Caco-2 (cell line): ENCODE measurements at regions of chr9 and their contacts with region 1.

Region 1: DNA sequence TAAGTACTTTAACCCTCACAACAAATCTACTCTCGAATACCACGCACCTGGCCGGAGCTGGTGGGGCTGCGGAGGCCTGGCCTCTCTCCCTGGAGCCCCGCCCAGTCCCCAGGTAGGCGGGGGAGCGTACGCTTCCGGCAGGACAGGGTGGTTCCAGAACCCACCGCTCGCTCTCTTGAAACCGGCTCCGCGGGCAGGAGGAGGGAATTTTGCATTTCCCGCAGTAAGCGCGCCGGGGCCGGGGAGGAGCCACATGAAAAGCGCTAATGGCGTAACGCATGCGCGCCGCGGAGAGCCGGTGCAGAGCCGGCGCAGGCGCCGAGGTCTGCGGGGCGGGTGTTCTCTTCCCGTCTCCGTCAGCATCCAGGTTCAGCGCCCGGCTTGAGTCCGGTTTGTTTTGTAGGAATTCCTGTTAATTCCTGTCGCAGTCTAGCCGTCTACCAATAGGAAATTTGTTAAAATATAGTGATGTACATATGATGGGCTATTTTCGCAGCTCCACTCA is 20.8 kb downstream of the CAVIN4 start:
- DNase-seq: peak; percentile 95
- H3K4me3 ChIP-seq: peak overlapping the region; percentile 52
- H3K4me3 Mint-ChIP-seq: peak overlapping the region; percentile 76
- H3K27ac Mint-ChIP-seq: peak overlapping the region; percentile 62
- H3K4me1 ChIP-seq: 0 out of 2 replicates have a peak, but pooled peaks cover 5% of the 10 kb centered on the region
- H3K4me1 Mint-ChIP-seq: peaks cover 20% of the 10 kb centered on the region
- H3K27me3 ChIP-seq: no peaks in the 10 kb centered on the region
- H3K27me3 Mint-ChIP-seq: no peaks in the 10 kb centered on the region
- CTCF ChIP-seq: no peak

Region 2: GRCh38 chr9:99184475-99185347 is 1414.0 kb before region 1 on chr9:
- CTCF ChIA-PET with region 1: no interaction called
- POLR2A ChIA-PET with region 1: no interaction called
- intact Hi-C with region 1: loop called (anchors 10 kb)
- DNase-seq: peak; percentile 81 to 82
- H3K4me3 ChIP-seq: no peak overlapping the region
- H3K4me3 Mint-ChIP-seq: no peak overlapping the region
- H3K27ac Mint-ChIP-seq: no peak overlapping the region
- H3K4me1 ChIP-seq: peaks cover 11% of the 10 kb centered on the region
- H3K4me1 Mint-ChIP-seq: peaks cover 9% of the 10 kb centered on the region
- H3K27me3 ChIP-seq: no peaks in the 10 kb centered on the region
- H3K27me3 Mint-ChIP-seq: peaks cover 16% of the 10 kb centered on the region
- CTCF ChIP-seq: peak; percentile 93 to 94

Region 3: DNA sequence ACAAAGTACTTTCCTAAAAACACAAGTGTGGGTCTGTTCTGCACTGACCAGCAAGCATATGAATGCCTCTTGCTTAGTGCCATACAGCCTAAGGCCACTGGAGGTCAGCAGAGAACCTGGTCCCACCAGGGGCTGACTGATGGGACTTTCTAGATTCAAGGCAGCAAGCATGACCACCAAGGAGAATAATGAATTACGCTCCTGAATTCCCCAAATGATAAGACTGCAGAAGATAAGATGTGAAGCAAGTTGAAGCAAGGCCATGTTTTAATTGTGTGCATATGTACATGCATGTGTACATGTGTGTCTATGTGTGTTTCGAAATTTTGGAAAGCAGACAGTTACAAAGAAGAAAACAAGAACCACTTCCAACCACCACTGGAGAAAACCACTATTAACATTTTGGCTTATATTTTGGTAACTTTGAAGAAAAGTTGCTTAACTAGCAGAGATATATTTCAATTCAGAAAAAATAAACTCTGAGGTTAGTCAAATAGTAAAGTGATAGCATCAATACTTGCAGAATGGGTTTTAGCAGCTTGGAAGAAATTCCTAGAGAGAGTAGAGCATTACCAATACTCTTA is 570.4 kb before region 1 on chr9:
- CTCF ChIA-PET with region 1: no interaction called
- POLR2A ChIA-PET with region 1: no interaction called
- intact Hi-C with region 1: loop called (anchors 1 kb)
- DNase-seq: peak; percentile 76 to 82
- H3K4me3 ChIP-seq: no peak overlapping the region
- H3K4me3 Mint-ChIP-seq: no peak overlapping the region
- H3K27ac Mint-ChIP-seq: no peak overlapping the region
- H3K4me1 ChIP-seq: no peaks in the 10 kb centered on the region
- H3K4me1 Mint-ChIP-seq: no peaks in the 10 kb centered on the region
- H3K27me3 ChIP-seq: no peaks in the 10 kb centered on the region
- H3K27me3 Mint-ChIP-seq: no peaks in the 10 kb centered on the region
- CTCF ChIP-seq: peak; percentile 84 to 95

Region 4: DNA sequence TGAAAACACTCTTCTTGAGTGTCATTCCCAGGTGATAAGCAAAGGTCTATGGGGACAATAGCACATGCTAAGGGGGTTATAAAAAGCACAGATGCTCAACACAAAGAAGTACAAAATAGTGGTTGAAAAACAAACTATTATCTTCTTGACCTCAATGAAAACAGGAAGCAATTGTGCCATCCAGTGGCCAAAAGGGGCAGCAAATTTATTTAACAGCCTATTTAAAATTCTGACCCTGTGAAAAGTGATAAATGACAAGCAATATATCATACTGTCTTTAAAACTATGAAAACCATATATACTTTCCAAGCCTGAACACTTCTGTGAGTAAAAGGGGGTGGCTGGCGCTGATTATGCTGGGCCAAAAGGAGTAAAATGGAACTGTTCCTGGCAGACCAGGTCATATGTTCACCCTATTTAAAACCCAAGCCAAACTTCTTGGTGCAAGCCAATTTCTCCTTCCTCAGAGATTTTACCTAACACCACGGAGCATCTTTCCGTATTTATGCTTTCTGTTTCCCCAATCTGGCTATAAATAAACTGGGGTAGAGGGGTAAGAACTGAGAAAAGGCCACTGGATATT is 275.6 kb before region 1 on chr9:
- CTCF ChIA-PET with region 1: interaction called, 3 read pairs
- POLR2A ChIA-PET with region 1: no interaction called
- intact Hi-C with region 1: loop called (anchors 1 kb)
- DNase-seq: peak; percentile 26 to 44
- H3K4me3 ChIP-seq: no peak overlapping the region
- H3K4me3 Mint-ChIP-seq: no peak overlapping the region
- H3K27ac Mint-ChIP-seq: no peak overlapping the region
- H3K4me1 ChIP-seq: no peaks in the 10 kb centered on the region
- H3K4me1 Mint-ChIP-seq: no peaks in the 10 kb centered on the region
- H3K27me3 ChIP-seq: no peaks in the 10 kb centered on the region
- H3K27me3 Mint-ChIP-seq: no peaks in the 10 kb centered on the region
- CTCF ChIP-seq: peak; percentile 53 to 58

Region 5: DNA sequence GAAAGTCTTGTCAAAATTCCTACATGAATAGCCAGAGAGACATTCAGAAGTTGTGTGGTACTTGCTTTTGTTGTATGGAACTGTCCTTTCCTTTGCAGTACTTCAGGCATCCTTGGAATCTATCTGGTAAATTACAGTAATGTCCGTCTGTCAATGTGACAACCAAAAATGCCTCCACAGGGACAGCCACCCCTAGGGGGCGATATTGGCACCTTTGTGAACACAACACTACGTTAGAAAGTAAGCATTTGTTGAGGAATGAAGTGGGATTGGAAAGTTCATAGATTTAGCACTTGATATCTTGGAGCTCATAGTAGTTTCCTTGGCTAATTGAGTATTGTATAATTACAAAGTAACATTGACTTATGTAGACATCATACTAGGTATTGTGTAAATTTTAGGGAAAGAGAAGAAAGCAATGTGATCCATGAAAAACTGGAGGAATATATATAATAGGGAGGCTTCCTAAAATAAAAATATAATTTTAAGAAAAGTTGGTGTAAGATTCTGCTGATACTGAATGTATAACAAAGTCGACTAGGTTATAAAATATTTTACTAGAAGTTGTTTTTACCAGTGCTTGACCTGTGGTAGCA is 93.0 kb before region 1 on chr9:
- CTCF ChIA-PET with region 1: interaction called, 3 read pairs
- POLR2A ChIA-PET with region 1: no interaction called
- intact Hi-C with region 1: loop called (anchors 1 kb)
- DNase-seq: peak; percentile 88 to 90
- H3K4me3 ChIP-seq: no peak overlapping the region
- H3K4me3 Mint-ChIP-seq: no peak overlapping the region
- H3K27ac Mint-ChIP-seq: no peak overlapping the region
- H3K4me1 ChIP-seq: no peaks in the 10 kb centered on the region
- H3K4me1 Mint-ChIP-seq: peaks cover 6% of the 10 kb centered on the region
- H3K27me3 ChIP-seq: no peaks in the 10 kb centered on the region
- H3K27me3 Mint-ChIP-seq: no peaks in the 10 kb centered on the region
- CTCF ChIP-seq: peak; percentile 74 to 78

Region 6: GRCh38 chr9:101028346-101029314 is 429.9 kb after region 1 on chr9 and contains the start of gene PLPPR1:
- CTCF ChIA-PET with region 1: no interaction called
- POLR2A ChIA-PET with region 1: no interaction called
- intact Hi-C with region 1: loop called (anchors 5 kb)
- DNase-seq: peak; percentile 59 to 81
- H3K4me3 ChIP-seq: peak within 1 kb of the TSS; percentile 41
- H3K4me3 Mint-ChIP-seq: peak within 1 kb of the TSS; percentile 84
- H3K27ac Mint-ChIP-seq: no peak within 1 kb of the TSS
- H3K4me1 ChIP-seq: 0 out of 2 replicates have a peak, but pooled peaks cover 3% of the 10 kb centered on the region
- H3K4me1 Mint-ChIP-seq: peaks cover 6% of the 10 kb centered on the region
- H3K27me3 ChIP-seq: peaks cover 3% of the 10 kb centered on the region
- H3K27me3 Mint-ChIP-seq: peaks cover 36% of the 10 kb centered on the region
- CTCF ChIP-seq: no peak
- total RNA-seq, gene PLPPR1: not detected in 2 replicates

Region 7: GRCh38 chr9:101063192-101063591 is 464.5 kb after region 1 on chr9:
- CTCF ChIA-PET with region 1: no interaction called
- POLR2A ChIA-PET with region 1: no interaction called
- intact Hi-C with region 1: no loop called
- DNase-seq: no peak
- H3K4me3 ChIP-seq: no peak overlapping the region
- H3K4me3 Mint-ChIP-seq: no peak overlapping the region
- H3K27ac Mint-ChIP-seq: no peak overlapping the region
- H3K4me1 ChIP-seq: 0 out of 2 replicates have a peak, but pooled peaks cover 7% of the 10 kb centered on the region
- H3K4me1 Mint-ChIP-seq: no peaks in the 10 kb centered on the region
- H3K27me3 ChIP-seq: no peaks in the 10 kb centered on the region
- H3K27me3 Mint-ChIP-seq: no peaks in the 10 kb centered on the region
- CTCF ChIP-seq: no peak

Region 8: DNA sequence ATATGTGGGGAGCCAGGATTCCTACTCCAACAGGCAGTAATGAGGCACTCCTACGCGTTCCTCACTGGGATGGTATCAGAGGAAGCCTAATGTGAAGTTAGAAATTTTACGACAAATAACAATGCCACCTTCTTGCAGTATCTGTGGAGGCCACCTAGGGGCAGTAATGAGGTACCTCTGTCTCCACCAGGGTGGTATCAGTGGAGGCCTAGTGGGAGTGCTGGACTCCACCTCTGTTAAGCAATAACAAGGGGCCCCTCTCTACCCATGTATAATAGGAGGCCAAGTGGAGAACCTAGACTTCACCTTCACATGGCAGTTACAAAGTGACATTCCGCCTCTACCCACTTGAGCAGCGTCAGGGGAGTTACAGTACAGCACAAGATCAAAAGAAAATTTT is 577.7 kb after region 1 on chr9:
- CTCF ChIA-PET with region 1: no interaction called
- POLR2A ChIA-PET with region 1: no interaction called
- intact Hi-C with region 1: no loop called
- DNase-seq: no peak
- H3K4me3 ChIP-seq: no peak overlapping the region
- H3K4me3 Mint-ChIP-seq: no peak overlapping the region
- H3K27ac Mint-ChIP-seq: no peak overlapping the region
- H3K4me1 ChIP-seq: no peaks in the 10 kb centered on the region
- H3K4me1 Mint-ChIP-seq: no peaks in the 10 kb centered on the region
- H3K27me3 ChIP-seq: no peaks in the 10 kb centered on the region
- H3K27me3 Mint-ChIP-seq: no peaks in the 10 kb centered on the region
- CTCF ChIP-seq: peak in 1 of 2 experiments; percentile 23

Region 9: DNA sequence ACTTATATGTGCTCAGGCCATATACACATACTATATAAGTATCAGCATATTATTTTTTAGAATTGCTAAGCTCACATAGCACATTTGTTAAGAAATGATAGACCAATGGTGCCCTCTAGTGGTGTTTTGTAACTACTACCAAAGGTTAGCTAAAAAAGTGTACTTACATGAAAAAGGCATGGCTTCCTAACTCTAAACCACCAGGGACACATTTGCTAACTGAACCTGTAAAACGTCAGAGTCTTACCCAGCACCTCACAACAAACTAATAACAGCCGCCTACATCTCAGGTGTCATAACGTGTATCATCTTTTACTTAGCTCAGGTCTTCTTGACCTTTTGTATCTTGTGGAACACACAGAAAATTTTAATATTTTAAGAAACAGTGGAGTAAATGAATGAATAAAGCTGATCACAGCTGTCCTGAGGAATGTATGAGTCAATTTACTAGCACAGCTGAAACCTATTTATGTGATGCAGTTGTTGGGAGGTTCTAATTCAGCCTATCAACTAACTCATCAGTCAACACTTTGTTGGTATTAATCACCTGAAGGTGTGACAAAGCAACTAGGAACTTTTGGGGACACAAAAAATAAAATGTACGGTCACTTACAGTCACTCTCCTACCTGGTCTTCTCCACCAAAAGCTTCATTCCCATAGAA is 713.2 kb after region 1 on chr9:
- CTCF ChIA-PET with region 1: interaction called, 29 read pairs
- POLR2A ChIA-PET with region 1: no interaction called
- intact Hi-C with region 1: loop called (anchors 1 kb)
- DNase-seq: peak in 1 of 2 experiments; percentile 72
- H3K4me3 ChIP-seq: no peak overlapping the region
- H3K4me3 Mint-ChIP-seq: no peak overlapping the region
- H3K27ac Mint-ChIP-seq: no peak overlapping the region
- H3K4me1 ChIP-seq: peaks cover 11% of the 10 kb centered on the region
- H3K4me1 Mint-ChIP-seq: peaks cover 6% of the 10 kb centered on the region
- H3K27me3 ChIP-seq: no peaks in the 10 kb centered on the region
- H3K27me3 Mint-ChIP-seq: no peaks in the 10 kb centered on the region
- CTCF ChIP-seq: peak; percentile 48 to 66